Activated T-helper 1 cell treated with anti-CD3 and anti-CD28 coated beads, Interleukin-12 subunit alpha, Interleukin-12 subunit beta, Interleukin-2, Interleukin-4 antibody, amounts not matched to agents 30 ng/mL and 10 ng/mL and 1 ng/mL, durations not matched to agents 14 hours and 24 hours and 36 hours (primary cell): ENCODE measurements at regions of chr1 and their contacts with region 1.

Region 1: DNA sequence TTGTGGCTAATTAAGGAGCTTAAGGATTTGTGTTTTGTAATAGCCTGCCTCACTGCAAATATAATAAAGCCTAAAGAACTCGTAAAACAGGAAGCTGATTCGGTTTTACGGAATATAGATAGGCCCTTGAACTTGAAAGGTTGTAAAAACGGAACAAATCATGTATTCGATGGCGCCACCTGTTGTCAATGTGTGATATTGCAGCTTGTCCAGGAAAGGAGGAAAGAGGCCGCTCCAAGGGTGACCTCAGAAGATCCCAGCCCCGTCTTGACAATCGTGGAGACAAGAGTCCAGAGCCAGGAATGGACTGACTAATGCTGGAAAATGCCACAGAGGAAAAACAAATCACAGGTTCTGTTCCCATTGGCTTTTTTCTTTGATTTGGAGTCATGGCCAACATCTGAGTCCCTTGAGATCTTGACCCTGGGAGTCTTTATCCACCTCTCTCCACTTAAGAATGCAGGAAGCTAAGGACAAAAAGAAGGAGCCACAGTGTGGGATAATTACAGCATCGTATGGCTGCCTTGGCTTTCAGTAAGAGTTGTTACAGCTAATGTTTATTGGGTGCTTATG is 7.0 kb upstream of the IGSF21 start:
- DNase-seq: peak; percentile 3
- H3K4me3 Mint-ChIP-seq: no peak overlapping the region
- H3K27ac Mint-ChIP-seq: no peak overlapping the region
- H3K4me1 Mint-ChIP-seq: no peaks in the 10 kb centered on the region
- H3K27me3 Mint-ChIP-seq: peaks cover 18% of the 10 kb centered on the region

Region 2: DNA sequence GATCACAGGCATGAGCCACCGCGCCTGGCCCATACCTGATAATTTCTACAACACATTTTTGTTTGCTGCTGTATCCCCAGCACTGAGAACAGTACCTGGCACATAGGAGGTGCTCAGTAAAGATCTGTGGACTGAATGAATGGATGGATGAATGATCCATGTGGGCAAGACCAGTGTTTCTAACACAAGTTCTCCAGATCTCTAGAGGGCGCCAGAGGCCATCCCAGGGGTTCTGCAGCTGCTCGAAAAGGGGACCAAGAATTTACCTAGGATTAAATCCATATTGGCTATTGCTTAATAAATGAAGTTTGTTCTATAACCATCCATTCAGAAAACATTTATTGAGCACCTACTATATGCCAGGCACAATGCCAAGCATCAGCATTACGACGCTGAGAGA is 177.7 kb before region 1 on chr1:
- intact Hi-C with region 1: loop called (anchors 2 kb)
- DNase-seq: no peak
- H3K4me3 Mint-ChIP-seq: no peak overlapping the region
- H3K27ac Mint-ChIP-seq: no peak overlapping the region
- H3K4me1 Mint-ChIP-seq: no peaks in the 10 kb centered on the region
- H3K27me3 Mint-ChIP-seq: no peaks in the 10 kb centered on the region

Region 3: GRCh38 chr1:17984583-17984982 is 116.0 kb before region 1 on chr1:
- intact Hi-C with region 1: loop called (anchors 2 kb)
- DNase-seq: no peak
- H3K4me3 Mint-ChIP-seq: no peak overlapping the region
- H3K27ac Mint-ChIP-seq: no peak overlapping the region
- H3K4me1 Mint-ChIP-seq: no peaks in the 10 kb centered on the region
- H3K27me3 Mint-ChIP-seq: no peaks in the 10 kb centered on the region

Region 4: DNA sequence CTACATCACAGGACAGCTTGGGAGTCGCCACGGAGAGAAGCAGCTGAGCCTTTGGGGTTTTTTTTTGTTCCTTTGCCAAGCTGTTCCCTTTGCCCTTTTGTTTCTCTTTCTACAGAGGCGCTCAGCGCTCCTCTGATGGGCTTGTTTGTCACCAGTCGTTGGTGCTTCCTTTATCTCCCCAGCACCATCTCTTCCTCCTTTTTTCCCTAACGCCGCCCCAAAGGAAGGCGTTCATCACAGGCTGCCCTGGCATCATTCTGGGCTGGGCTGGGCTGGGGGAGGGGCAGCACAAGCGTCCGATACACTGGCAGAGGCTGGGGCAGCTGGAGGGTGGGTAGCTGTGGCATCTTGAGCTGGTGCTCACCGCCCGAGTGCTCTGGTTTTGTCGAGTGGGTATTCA is 17.5 kb after region 1 on chr1:
- intact Hi-C with region 1: no loop called
- DNase-seq: no peak
- H3K4me3 Mint-ChIP-seq: no peak overlapping the region
- H3K27ac Mint-ChIP-seq: no peak overlapping the region
- H3K4me1 Mint-ChIP-seq: no peaks in the 10 kb centered on the region
- H3K27me3 Mint-ChIP-seq: peaks cover 5% of the 10 kb centered on the region

Region 5: GRCh38 chr1:18134324-18135046 is 33.9 kb after region 1 on chr1:
- intact Hi-C with region 1: no loop called
- DNase-seq: no peak
- H3K4me3 Mint-ChIP-seq: no peak overlapping the region
- H3K27ac Mint-ChIP-seq: no peak overlapping the region
- H3K4me1 Mint-ChIP-seq: no peaks in the 10 kb centered on the region
- H3K27me3 Mint-ChIP-seq: peaks cover 2% of the 10 kb centered on the region

Region 6: DNA sequence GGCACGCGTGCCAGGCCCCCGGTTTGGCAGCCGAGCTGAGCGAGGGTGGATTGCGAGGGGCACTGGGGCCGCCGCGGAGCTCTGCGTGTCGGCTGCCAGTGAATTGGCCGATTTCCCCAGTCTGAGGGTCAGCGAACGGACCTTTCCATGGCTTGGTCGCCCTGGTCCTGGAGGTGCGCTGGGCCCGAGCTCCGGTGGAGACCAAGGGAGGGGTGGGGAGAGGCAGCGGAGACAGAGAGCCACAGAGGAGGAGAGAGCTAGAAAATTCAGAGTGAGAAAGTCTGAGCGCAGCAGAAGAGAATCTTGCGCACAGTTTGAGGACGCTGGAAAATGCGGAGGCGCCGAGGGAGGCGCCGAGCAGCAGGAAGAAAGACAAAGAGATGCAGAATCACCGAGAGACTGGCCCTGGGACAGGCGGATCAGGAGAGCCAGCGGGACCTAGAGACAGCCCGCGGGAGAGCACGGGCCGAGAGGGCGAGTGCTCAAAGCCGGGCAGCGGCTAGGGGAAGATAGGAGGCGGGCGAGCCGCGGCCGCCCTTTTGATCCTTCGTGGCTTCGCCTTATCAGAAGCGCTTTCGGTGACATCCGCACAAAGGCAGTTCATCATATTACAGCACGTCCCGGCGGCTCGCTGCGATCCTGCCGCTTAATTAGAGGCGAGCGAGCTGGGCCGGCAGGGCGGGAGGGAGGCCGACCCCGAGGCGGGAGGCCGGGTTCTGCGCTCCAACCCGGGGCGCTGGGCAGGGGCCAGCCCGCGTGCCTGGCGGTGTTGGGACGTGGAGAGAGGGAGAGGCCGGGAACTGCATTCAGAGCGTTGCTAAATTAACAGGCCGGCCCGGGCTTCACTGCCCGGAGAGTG is 542.8 kb after region 1 on chr1:
- intact Hi-C with region 1: loop called (anchors 10 kb)
- DNase-seq: no peak
- H3K4me3 Mint-ChIP-seq: no peak overlapping the region
- H3K27ac Mint-ChIP-seq: no peak overlapping the region
- H3K4me1 Mint-ChIP-seq: peaks cover 15% of the 10 kb centered on the region
- H3K27me3 Mint-ChIP-seq: peaks cover 84% of the 10 kb centered on the region